ENCODE measurements at regions of chr18 and their contacts with region 1.

Region 1: DNA sequence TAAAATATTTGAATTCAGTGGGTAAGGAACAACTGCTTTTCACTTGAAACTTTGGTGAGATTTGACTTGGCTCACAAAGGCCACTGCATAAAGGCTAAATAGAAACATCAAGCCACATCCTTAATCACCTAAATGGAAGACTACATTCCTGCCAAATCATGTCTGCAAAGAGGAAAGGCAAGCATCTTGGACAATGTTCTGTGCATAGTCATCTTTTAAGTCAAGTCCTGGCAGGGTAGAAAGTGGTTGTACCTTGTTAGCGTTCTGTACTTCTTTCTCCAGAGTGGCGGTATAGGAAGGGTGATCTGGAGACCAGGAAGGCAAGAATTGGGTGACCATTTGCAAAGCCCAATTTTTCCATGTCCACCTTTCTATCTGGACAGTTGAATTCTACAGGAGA is 121.4 kb upstream of the SLC14A2 start:
- DNase-seq: no peak
- H3K4me3 ChIP-seq: no peak overlapping the region
- H3K27ac ChIP-seq: no peak overlapping the region
- H3K27me3 ChIP-seq: no peaks in the 10 kb centered on the region
- CTCF ChIP-seq: no peak

Region 2: GRCh38 chr18:44973282-44973681 is 520.5 kb before region 1 on chr18:
- intact Hi-C with region 1: no loop called
- DNase-seq: no peak
- H3K4me3 ChIP-seq: no peak overlapping the region
- H3K27ac ChIP-seq: no peak overlapping the region
- H3K27me3 ChIP-seq: no peaks in the 10 kb centered on the region
- CTCF ChIP-seq: no peak

Region 3: DNA sequence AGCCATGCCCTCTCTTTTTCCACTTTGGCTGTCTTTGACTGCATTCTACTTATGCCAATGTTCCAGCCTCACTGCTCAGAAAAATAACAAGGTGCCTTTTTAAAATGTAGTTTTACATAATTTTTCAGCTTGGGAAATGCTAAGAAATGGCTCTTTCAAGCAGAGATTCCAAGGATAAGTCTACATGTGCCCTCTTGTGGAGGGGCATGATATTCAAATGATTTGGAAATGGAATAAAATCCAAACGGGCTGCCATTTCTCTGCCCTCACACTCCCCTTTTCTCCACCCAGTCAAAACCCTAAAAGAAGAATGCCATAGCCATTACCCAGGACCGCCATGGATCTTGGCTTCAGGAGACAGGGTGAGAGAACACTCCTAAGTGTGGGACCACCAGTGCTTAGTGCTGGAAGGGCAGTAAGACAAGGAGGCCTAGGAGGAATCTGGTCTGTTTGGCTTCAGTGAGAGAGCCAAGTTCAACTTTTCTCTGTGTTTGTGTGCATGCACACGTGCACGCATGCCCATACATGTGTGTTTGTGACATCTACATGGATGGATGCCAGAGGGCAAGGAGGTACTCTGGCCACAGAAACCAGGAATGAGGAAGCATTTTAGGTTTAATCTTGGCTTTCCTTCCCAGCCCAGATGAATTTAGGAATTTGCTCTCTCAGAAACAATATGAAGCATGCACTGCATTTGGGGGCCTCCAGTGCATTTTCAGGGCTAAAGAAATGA is 52.6 kb before region 1 on chr18:
- intact Hi-C with region 1: loop called in 1 of 2 experiments (anchors 10 kb)
- DNase-seq: no peak
- H3K4me3 ChIP-seq: no peak overlapping the region
- H3K27ac ChIP-seq: no peak overlapping the region
- H3K27me3 ChIP-seq: peaks cover 0 to 6% (median 0%) of the 10 kb centered on the region in 45 donors
- CTCF ChIP-seq: peak in 21 of 56 donors; percentile 12 to 37 (median 23)